ENCODE measurements at regions of chr1 and their contacts with region 1.

Region 1: DNA sequence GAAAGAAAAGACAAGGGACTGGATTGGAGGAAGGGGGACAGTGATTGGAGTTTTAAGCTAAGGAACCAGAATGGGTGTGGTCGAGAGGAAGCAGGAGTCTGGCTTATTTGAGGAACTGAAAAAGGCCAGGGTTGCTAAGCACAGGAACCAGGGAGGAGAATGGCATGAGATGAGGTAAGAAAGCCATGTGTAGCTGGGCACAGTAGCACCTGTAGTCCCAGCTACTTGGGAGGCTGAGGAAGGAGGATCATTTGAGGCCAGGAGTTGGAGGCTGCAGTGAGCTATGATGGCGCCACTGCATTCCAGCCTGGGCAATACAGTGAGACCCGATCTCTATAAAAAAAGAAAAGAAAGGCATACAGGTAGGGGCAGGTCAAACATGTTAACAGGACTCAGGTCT is 8.1 kb upstream of the KHDRBS1 start:
- DNase-seq: no peak
- H3K4me3 Mint-ChIP-seq: no peak overlapping the region
- H3K27ac Mint-ChIP-seq: no peak overlapping the region
- H3K4me1 Mint-ChIP-seq: peaks cover 5% of the 10 kb centered on the region
- H3K27me3 Mint-ChIP-seq: no peaks in the 10 kb centered on the region

Region 2: GRCh38 chr1:31815752-31816500 is 189.6 kb before region 1 on chr1 and contains the start of gene SPOCD1:
- CTCF ChIA-PET with region 1: interaction called, 19 read pairs
- POLR2A ChIA-PET with region 1: no interaction called
- intact Hi-C with region 1: no loop called
- DNase-seq: peak; percentile 93
- H3K4me3 Mint-ChIP-seq: peak within 1 kb of the TSS; percentile 48
- H3K27ac Mint-ChIP-seq: peak within 1 kb of the TSS; percentile 14
- H3K4me1 Mint-ChIP-seq: peaks cover 7% of the 10 kb centered on the region
- H3K27me3 Mint-ChIP-seq: no peaks in the 10 kb centered on the region
- total RNA-seq, gene SPOCD1: 0.73 to 0.78 TPM

Region 3: DNA sequence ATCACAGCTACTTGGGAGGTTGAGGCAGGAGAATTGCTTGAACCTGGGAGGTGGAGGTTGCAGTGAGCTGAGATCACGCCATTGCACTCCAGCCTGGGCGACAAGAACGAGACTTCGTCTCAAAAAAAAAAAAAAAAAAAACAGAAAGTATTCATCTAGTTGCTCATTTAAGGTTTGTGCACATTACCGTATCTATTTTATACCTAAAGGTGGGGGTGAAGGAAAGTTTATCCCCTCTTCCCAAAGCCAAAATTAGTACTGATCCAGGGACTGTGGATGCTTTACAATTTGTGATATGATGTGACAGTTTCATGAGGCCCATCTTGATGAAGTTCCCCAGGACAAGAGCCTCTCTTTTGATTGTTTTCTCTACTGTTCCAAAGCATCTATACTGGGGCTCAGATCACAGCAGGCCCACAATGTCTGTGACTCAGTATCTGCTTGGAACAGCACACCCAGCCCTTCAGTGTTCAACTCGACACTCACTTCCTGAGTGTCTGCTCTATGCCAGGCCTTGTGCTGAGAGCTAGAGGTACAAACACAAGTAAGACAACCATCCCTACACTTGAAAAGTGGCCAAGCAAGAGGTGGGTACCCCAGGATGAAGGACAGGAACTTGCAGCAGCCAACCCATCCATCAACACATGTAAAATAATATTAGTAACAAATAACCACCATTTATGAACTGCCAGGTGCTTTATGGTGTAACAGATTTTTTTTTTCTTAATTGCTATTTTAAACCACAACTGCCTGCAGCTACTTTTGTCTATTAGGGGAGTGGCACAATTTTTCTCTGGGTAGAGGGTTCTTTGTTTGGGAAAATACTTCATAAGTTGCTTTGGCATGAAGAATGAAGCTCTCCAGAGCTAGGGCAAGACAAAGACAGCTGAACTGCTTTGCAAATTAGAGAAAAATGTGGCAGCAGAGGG is 20.8 kb before region 1 on chr1:
- CTCF ChIA-PET with region 1: interaction called, 10 read pairs
- POLR2A ChIA-PET with region 1: interaction called, 4 read pairs
- intact Hi-C with region 1: no loop called
- DNase-seq: peak; percentile 67
- H3K4me3 Mint-ChIP-seq: peak overlapping the region; percentile 27
- H3K27ac Mint-ChIP-seq: peak overlapping the region; percentile 96
- H3K4me1 Mint-ChIP-seq: peaks cover 43% of the 10 kb centered on the region
- H3K27me3 Mint-ChIP-seq: no peaks in the 10 kb centered on the region

Region 4: DNA sequence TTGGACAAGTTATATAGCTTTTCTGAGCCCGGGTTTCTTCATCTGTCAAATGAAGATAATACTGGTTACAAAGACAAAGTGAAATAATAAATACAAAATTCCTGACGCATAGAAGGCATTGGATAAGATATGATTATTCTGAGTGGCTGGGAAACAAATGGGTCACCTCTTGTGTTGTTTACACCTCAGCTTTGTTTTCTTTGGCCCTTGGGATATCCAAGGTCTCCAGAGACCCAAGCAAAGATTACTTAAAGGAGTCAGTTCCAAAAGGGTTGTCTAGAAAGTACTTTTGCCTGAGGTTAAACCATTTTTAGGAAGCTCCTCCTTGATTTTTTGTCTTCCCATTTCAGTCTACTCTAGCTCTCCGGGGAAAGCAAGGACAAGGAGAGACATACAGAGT is 17.8 kb after region 1 on chr1:
- CTCF ChIA-PET with region 1: interaction called, 11 read pairs
- POLR2A ChIA-PET with region 1: no interaction called
- intact Hi-C with region 1: no loop called
- DNase-seq: no peak
- H3K4me3 Mint-ChIP-seq: no peak overlapping the region
- H3K27ac Mint-ChIP-seq: no peak overlapping the region
- H3K4me1 Mint-ChIP-seq: peaks cover 43% of the 10 kb centered on the region
- H3K27me3 Mint-ChIP-seq: no peaks in the 10 kb centered on the region

Region 5: DNA sequence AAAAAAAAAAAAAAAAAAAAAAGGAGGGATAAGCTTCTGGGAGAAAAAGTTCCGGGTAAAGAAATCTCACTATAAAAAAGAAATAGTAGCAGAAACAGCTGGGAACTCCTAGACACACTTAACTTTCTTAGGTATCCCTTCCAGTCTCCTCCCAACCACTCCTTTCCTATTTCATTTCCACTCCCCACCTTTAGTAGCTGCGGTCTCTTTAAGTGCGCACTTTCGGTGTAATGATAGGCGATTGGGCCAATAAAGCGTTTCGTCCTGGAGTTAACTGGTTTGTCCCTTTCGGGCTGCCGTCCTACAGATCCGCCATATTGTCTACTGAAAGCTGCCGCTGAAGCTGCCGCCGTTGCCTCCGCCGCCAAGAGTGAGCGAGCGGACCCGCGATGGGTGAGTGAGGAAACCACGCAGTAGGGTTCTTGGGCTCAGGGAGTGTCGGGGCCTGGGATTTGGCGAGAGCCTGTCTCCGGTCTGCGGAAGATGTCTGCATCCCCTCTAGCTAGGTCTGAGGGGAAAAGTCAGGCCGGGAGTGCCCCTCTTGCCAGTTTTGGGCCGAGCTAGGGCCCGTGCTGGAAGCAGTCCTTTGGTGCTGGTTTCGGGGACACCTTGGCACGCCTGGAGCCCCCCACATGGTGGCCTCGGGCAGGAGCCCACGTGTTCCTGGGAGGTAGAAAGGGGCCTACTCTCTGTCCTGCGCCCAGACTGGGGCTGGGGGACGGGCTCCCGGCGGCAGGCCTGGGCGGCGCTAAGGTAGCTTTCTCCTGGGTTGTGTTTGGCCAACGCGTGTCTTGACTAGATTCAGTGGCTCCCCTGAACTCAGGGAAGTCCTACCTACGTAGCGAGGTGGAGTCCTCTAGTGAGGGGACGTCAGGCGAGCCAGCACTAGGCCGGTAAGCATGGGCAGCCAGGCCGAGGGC is 102.5 kb after region 1 on chr1 and contains the start of gene KPNA6:
- CTCF ChIA-PET with region 1: no interaction called
- POLR2A ChIA-PET with region 1: no interaction called
- intact Hi-C with region 1: no loop called
- DNase-seq: peak; percentile 95
- H3K4me3 Mint-ChIP-seq: peak within 1 kb of the TSS; percentile 100
- H3K27ac Mint-ChIP-seq: peak within 1 kb of the TSS; percentile 96
- H3K4me1 Mint-ChIP-seq: peaks cover 37% of the 10 kb centered on the region
- H3K27me3 Mint-ChIP-seq: no peaks in the 10 kb centered on the region
- total RNA-seq, gene KPNA6: 69.8 to 77.6 TPM

Measured in activated CD4-positive, alpha-beta memory T cell treated with anti-CD3 and anti-CD28 coated beads for 36 hours (primary cell).